Ascending aorta (tissue), 2 donors: ENCODE measurements at regions of chr21 and their contacts with region 1.

Region 1: GRCh38 chr21:31866077-31866511 is 6.7 kb upstream of the HUNK start:
- DNase-seq: peak in 1 of 2 donors; percentile 88
- H3K4me3 ChIP-seq: no peak overlapping the region
- H3K27ac ChIP-seq: no peak overlapping the region
- H3K4me1 ChIP-seq: no peaks in the 10 kb centered on the region
- H3K27me3 ChIP-seq: no peaks in the 10 kb centered on the region
- CTCF ChIP-seq: peak; percentile 55 to 91 (median 87)

Region 2: GRCh38 chr21:31659536-31660258 is 206.4 kb before region 1 on chr21 and contains the start of gene SOD1:
- intact Hi-C with region 1: loop called (anchors 5 kb)
- DNase-seq: peak; percentile 82 to 97
- H3K4me3 ChIP-seq: peak within 1 kb of the TSS; percentile 73 to 76
- H3K27ac ChIP-seq: peak within 1 kb of the TSS; percentile 89 to 90
- H3K4me1 ChIP-seq: peaks cover 0 to 28% of the 10 kb centered on the region in 2 donors
- H3K27me3 ChIP-seq: no peaks in the 10 kb centered on the region
- CTCF ChIP-seq: no peak
- total RNA-seq, gene SOD1: 87.7 TPM

Region 3: GRCh38 chr21:31713973-31714740 is 151.9 kb before region 1 on chr21:
- intact Hi-C with region 1: no loop called
- DNase-seq: no peak
- H3K4me3 ChIP-seq: no peak overlapping the region
- H3K27ac ChIP-seq: no peak overlapping the region
- H3K4me1 ChIP-seq: peaks cover 6 to 41% of the 10 kb centered on the region in 2 donors
- H3K27me3 ChIP-seq: no peaks in the 10 kb centered on the region
- CTCF ChIP-seq: no peak

Region 4: GRCh38 chr21:31938330-31939300 is 72.5 kb after region 1 on chr21:
- intact Hi-C with region 1: no loop called
- DNase-seq: no peak
- H3K4me3 ChIP-seq: no peak overlapping the region
- H3K27ac ChIP-seq: no peak overlapping the region
- H3K4me1 ChIP-seq: no peaks in the 10 kb centered on the region
- H3K27me3 ChIP-seq: no peaks in the 10 kb centered on the region
- CTCF ChIP-seq: no peak

Region 5: GRCh38 chr21:32044205-32045180 is 178.4 kb after region 1 on chr21:
- intact Hi-C with region 1: no loop called
- DNase-seq: no peak
- H3K4me3 ChIP-seq: no peak overlapping the region
- H3K27ac ChIP-seq: no peak overlapping the region
- H3K4me1 ChIP-seq: no peaks in the 10 kb centered on the region
- H3K27me3 ChIP-seq: no peaks in the 10 kb centered on the region
- CTCF ChIP-seq: no peak

Region 6: DNA sequence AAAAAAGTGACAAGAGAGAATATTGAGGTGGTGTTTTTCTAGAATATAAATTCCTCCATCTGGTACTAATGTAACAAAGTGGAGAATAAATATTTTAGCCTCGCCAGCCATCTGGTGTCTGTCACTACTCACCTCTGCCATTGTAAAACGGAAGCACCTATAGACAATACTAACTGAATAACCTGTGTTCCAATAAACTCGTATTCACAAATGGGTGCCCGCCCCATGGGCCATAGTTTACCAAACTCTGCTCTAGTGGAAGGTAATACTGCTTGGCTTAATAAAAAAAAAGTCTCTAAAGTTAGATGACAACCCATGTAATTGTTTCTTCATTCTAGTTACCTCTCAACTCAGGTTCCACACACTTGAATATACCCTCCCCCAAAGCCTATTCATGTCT is 404.7 kb after region 1 on chr21:
- intact Hi-C with region 1: no loop called
- DNase-seq: no peak
- H3K4me3 ChIP-seq: no peak overlapping the region
- H3K27ac ChIP-seq: no peak overlapping the region
- H3K4me1 ChIP-seq: no peaks in the 10 kb centered on the region
- H3K27me3 ChIP-seq: no peaks in the 10 kb centered on the region
- CTCF ChIP-seq: no peak

Region 7: DNA sequence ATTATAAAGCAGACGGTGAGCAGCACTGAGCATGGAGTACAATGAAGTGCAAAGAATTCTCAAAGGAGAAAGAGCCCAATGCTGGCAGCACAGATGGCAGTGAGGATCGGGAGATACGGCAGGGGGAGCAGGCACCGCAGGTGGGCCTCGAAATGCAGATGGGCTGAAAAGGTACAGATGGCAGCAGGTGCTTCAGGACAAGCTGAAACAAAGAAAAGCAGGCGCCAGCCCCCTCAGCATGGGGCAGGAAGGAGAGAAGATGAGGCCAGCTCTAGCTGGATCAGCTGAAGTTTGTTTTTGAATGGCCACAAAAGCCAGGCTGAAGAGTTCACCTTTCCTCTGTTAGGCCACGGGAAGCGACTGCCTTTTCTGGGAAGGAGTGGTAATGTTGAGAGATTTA is 738.4 kb after region 1 on chr21:
- intact Hi-C with region 1: loop called (anchors 5 kb)
- DNase-seq: no peak
- H3K4me3 ChIP-seq: no peak overlapping the region
- H3K27ac ChIP-seq: no peak overlapping the region
- H3K4me1 ChIP-seq: no peaks in the 10 kb centered on the region
- H3K27me3 ChIP-seq: no peaks in the 10 kb centered on the region
- CTCF ChIP-seq: no peak